Endothelial cell of umbilical vein (primary cell): ENCODE measurements at regions of chr2 and their contacts with region 1.

Region 1: GRCh38 chr2:96509114-96509846 is 4.1 kb upstream of the NEURL3 start:
- DNase-seq: peak; percentile 78
- H3K4me3 ChIP-seq: no peak overlapping the region
- H3K27ac ChIP-seq: no peak overlapping the region
- H3K4me1 ChIP-seq: no peaks in the 10 kb centered on the region
- H3K27me3 ChIP-seq: peaks cover 2 to 3% of the 10 kb centered on the region in 2 experiments
- CTCF ChIP-seq: peak; percentile 99
- POLR2A ChIP-seq: no peak

Region 2: GRCh38 chr2:96024336-96025193 is 484.7 kb before region 1 on chr2:
- CTCF ChIA-PET with region 1: interaction called, 10 read pairs
- POLR2A ChIA-PET with region 1: no interaction called
- dilution Hi-C with region 1: no loop called
- intact Hi-C with region 1: no loop called
- DNase-seq: no peak
- H3K4me3 ChIP-seq: no peak overlapping the region
- H3K27ac ChIP-seq: no peak overlapping the region
- H3K4me1 ChIP-seq: no peaks in the 10 kb centered on the region
- H3K27me3 ChIP-seq: no peaks in the 10 kb centered on the region
- CTCF ChIP-seq: no peak
- POLR2A ChIP-seq: no peak

Region 3: GRCh38 chr2:96174251-96175144 is 334.8 kb before region 1 on chr2:
- CTCF ChIA-PET with region 1: interaction called, 10 read pairs
- POLR2A ChIA-PET with region 1: no interaction called
- dilution Hi-C with region 1: no loop called
- intact Hi-C with region 1: no loop called
- DNase-seq: peak; percentile 65
- H3K4me3 ChIP-seq: no peak overlapping the region
- H3K27ac ChIP-seq: no peak overlapping the region
- H3K4me1 ChIP-seq: no peaks in the 10 kb centered on the region
- H3K27me3 ChIP-seq: no peaks in the 10 kb centered on the region
- CTCF ChIP-seq: peak; percentile 78 to 90
- POLR2A ChIP-seq: no peak

Region 4: DNA sequence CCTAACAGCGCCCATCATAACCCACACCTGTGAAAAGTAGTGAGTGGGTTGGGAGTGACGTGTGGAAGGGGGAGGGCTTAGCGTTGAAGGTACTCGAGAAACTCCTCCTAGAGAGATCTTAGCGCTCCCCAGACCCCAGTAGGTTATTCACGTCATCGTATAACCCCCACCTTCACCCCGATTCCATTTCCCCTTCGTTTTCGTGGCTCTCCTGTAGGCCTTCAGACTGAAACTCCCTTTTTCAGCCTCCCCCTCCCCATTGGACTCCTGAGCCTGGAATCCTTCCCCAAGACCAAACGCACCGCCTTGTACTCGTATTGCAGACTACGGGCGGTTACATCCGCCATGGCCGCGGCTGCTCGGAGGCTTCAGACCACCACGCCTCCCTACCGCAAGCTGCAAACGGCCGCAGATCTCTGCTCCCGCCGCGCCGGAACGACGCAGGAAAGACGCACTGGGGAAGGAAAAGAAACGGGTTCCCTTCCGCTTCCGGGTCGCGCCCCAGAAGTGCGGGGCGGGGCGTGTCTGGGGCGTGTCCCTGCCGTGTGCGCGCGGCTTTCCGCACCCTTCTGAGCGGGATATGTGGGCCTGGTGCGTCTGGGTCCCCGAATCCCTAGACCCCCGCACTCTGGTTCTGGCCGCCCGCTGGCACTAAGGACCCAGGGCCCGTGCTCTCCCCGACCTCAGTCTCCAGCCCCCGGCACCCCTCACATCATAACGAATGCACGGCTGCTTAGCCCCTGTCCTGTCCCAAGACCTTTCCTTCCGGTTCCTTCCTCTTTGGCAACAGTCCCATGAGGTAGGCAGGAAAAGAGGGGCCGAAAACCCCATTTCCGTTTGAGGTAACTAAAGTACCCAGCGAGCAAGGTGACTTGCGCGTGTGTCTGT is 203.9 kb before region 1 on chr2 and contains the start of gene SNRNP200:
- CTCF ChIA-PET with region 1: interaction called, 5 read pairs
- POLR2A ChIA-PET with region 1: no interaction called
- dilution Hi-C with region 1: no loop called
- intact Hi-C with region 1: loop called (anchors 2 kb)
- DNase-seq: peak; percentile 74
- H3K4me3 ChIP-seq: peak within 1 kb of the TSS; percentile 60 to 81 (median 78)
- H3K27ac ChIP-seq: peak within 1 kb of the TSS; percentile 63
- H3K4me1 ChIP-seq: peaks cover 11% of the 10 kb centered on the region
- H3K27me3 ChIP-seq: no peaks in the 10 kb centered on the region
- CTCF ChIP-seq: no peak
- POLR2A ChIP-seq: peak; percentile 58
- total RNA-seq, gene SNRNP200: 117 and 124 TPM in 2 replicates

Region 5: GRCh38 chr2:96407041-96407918 is 102.0 kb before region 1 on chr2:
- CTCF ChIA-PET with region 1: interaction called, 451 read pairs
- POLR2A ChIA-PET with region 1: no interaction called
- dilution Hi-C with region 1: no loop called
- intact Hi-C with region 1: loop called (anchors 1 kb)
- DNase-seq: peak; percentile 63
- H3K4me3 ChIP-seq: no peak overlapping the region
- H3K27ac ChIP-seq: no peak overlapping the region
- H3K4me1 ChIP-seq: no peaks in the 10 kb centered on the region
- H3K27me3 ChIP-seq: no peaks in the 10 kb centered on the region
- CTCF ChIP-seq: peak; percentile 74 to 86
- POLR2A ChIP-seq: no peak

Region 6: GRCh38 chr2:96495982-96496629 is 13.2 kb before region 1 on chr2:
- CTCF ChIA-PET with region 1: interaction called, 10 read pairs
- POLR2A ChIA-PET with region 1: no interaction called
- dilution Hi-C with region 1: no loop called
- intact Hi-C with region 1: no loop called
- DNase-seq: peak; percentile 66
- H3K4me3 ChIP-seq: no peak overlapping the region
- H3K27ac ChIP-seq: no peak overlapping the region
- H3K4me1 ChIP-seq: no peaks in the 10 kb centered on the region
- H3K27me3 ChIP-seq: peaks cover 38 to 60% of the 10 kb centered on the region in 2 experiments
- CTCF ChIP-seq: no peak
- POLR2A ChIP-seq: no peak

Region 7: DNA sequence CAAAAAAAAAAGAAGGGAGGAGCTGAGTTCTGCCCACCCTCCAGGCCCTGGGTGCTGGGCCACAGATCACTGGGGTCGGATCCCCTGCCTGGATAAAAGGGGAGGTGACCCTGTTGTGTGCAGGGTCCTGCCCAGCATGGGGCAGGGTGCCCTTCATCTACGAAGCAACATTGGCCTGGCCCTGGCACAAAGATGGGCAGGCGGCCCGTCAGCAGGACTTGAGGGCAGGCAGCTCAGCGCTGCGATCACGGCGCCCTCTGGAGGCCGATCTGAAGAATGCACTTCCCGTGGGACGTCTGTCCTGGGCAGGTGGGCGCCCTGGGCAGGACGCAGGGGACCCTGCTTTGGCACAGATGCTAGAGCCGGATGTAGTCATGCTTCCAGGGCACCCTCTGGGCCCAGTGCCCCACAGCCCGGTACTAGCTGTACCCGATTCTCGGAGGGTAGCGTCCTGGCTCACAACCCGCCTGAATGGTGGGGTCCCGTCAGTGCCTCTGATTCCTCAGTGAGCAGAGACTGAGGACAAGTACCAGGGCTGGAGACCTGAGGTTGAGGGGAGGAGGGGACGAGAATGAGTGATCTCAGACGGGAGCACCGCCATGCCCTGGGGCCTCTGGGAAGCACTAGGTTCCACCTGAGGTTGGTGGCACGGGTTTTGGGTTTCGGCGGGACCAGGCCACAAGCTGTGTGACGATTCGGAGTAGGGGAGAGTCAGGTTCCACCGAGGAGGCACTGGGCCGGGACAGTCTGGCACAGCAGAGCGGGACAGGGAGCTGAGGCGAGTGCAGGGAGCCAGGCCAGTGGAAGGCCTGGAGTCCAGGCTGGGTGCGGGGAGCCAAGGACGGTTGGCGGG is 45.2 kb after region 1 on chr2:
- CTCF ChIA-PET with region 1: interaction called, 59 read pairs
- POLR2A ChIA-PET with region 1: no interaction called
- dilution Hi-C with region 1: no loop called
- intact Hi-C with region 1: loop called (anchors 1 kb)
- DNase-seq: peak; percentile 65
- H3K4me3 ChIP-seq: no peak overlapping the region
- H3K27ac ChIP-seq: no peak overlapping the region
- H3K4me1 ChIP-seq: no peaks in the 10 kb centered on the region
- H3K27me3 ChIP-seq: no peaks in the 10 kb centered on the region
- CTCF ChIP-seq: peak; percentile 91 to 92
- POLR2A ChIP-seq: no peak